Activated B cell treated with CpG ODN at 0.5 μM for 24 hours (primary cell): ENCODE measurements at regions of chr14 and their contacts with region 1.

Region 1: DNA sequence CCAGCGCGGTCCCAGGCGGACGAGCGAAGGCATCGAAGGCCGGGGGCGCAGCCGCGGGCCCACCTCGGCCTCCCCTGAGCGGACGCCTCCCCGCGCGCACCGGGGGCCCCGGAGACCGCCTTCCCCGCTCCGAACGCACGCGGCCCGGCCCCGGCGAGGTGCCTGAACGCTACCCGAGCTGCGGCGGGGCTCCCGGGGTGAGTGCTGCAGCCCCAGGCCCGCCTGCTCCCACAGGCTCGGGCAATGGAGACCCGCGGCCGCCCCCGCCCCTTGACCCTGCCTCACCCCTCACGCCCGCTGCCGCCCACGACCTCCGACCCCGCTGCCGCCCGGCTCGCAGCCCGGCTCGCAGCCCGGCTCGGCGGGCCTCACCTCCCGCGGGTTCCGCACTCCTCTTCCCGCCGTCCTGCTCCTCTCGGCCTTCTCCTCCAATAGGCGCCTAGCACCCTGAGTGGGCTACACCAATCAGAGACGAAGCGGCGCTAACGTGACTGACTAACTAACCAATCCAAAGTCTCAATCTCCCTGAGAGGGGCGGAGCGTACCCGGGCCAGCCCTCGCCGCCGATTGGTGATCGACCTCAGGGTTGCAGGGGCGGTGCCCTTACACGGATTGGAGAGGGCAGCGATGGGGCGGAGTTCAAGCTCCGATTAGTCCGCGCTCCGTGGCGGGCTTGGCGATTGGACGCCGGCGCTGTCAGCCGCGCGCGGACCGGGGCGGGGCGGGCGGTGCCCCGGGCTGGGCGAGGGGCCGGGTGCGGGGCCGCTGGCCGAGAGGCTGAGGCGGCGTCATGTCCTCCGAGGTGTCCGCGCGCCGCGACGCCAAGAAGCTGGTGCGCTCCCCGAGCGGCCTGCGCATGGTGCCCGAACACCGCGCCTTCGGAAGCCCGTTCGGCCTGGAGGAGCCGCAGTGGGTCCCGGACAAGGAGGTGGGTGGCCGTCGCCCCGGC is at the starts of genes XRCC3 and ZFYVE21:
- DNase-seq: peak; percentile 97
- ATAC-seq: peak; percentile 95
- H3K4me3 Mint-ChIP-seq: peak within 1 kb of the TSS; percentile 89
- H3K27ac Mint-ChIP-seq: peak within 1 kb of the TSS; percentile 81
- H3K4me1 Mint-ChIP-seq: peaks cover 34% of the 10 kb centered on the region
- H3K27me3 Mint-ChIP-seq: no peaks in the 10 kb centered on the region
- CTCF ChIP-seq: no peak
- total RNA-seq, gene XRCC3: 23.5 and 26.0 TPM in 2 replicates
- total RNA-seq, gene ZFYVE21: 12.4 and 16.7 TPM in 2 replicates

Region 2: GRCh38 chr14:103562429-103563225 is 152.7 kb before region 1 on chr14 and contains the starts of genes BAG5 and COA8:
- CTCF ChIA-PET with region 1: no interaction called
- POLR2A ChIA-PET with region 1: no interaction called
- intact Hi-C with region 1: loop called (anchors 1 kb)
- DNase-seq: peak; percentile 89
- ATAC-seq: peak; percentile 79
- H3K4me3 Mint-ChIP-seq: peak within 1 kb of the TSS; percentile 89
- H3K27ac Mint-ChIP-seq: peak within 1 kb of the TSS; percentile 79
- H3K4me1 Mint-ChIP-seq: peaks cover 52% of the 10 kb centered on the region
- H3K27me3 Mint-ChIP-seq: no peaks in the 10 kb centered on the region
- CTCF ChIP-seq: no peak
- total RNA-seq, gene BAG5: 26.9 and 28.8 TPM in 2 replicates
- total RNA-seq, gene COA8: 28.4 and 28.8 TPM in 2 replicates

Region 3: GRCh38 chr14:103699901-103700752 is 15.2 kb before region 1 on chr14:
- CTCF ChIA-PET with region 1: no interaction called
- POLR2A ChIA-PET with region 1: interaction called, 7 read pairs
- intact Hi-C with region 1: loop called (anchors 2 kb)
- DNase-seq: no peak
- ATAC-seq: no peak
- H3K4me3 Mint-ChIP-seq: no peak overlapping the region
- H3K27ac Mint-ChIP-seq: no peak overlapping the region
- H3K4me1 Mint-ChIP-seq: peaks cover 72% of the 10 kb centered on the region
- H3K27me3 Mint-ChIP-seq: no peaks in the 10 kb centered on the region
- CTCF ChIP-seq: no peak

Region 4: GRCh38 chr14:103847451-103848188 is 132.3 kb after region 1 on chr14 and contains the start of gene PPP1R13B:
- CTCF ChIA-PET with region 1: no interaction called
- POLR2A ChIA-PET with region 1: no interaction called
- intact Hi-C with region 1: loop called (anchors 1 kb)
- DNase-seq: peak; percentile 96
- ATAC-seq: peak; percentile 97
- H3K4me3 Mint-ChIP-seq: peak within 1 kb of the TSS; percentile 87
- H3K27ac Mint-ChIP-seq: peak within 1 kb of the TSS; percentile 63
- H3K4me1 Mint-ChIP-seq: peaks cover 12% of the 10 kb centered on the region
- H3K27me3 Mint-ChIP-seq: no peaks in the 10 kb centered on the region
- CTCF ChIP-seq: no peak
- total RNA-seq, gene PPP1R13B: 16.2 and 18.8 TPM in 2 replicates

Region 5: GRCh38 chr14:103920981-103921854 is 205.9 kb after region 1 on chr14:
- CTCF ChIA-PET with region 1: no interaction called
- POLR2A ChIA-PET with region 1: interaction called, 5 read pairs
- intact Hi-C with region 1: loop called (anchors 1 kb)
- DNase-seq: peak; percentile 99
- ATAC-seq: peak; percentile 100
- H3K4me3 Mint-ChIP-seq: peak overlapping the region; percentile 91
- H3K27ac Mint-ChIP-seq: peak overlapping the region; percentile 66
- H3K4me1 Mint-ChIP-seq: peaks cover 15% of the 10 kb centered on the region
- H3K27me3 Mint-ChIP-seq: no peaks in the 10 kb centered on the region
- CTCF ChIP-seq: peak; percentile 96